GM23248 (cell line): ENCODE measurements at regions of chr15 and their contacts with region 1.

Region 1: GRCh38 chr15:39767921-39768320 is 14.7 kb downstream of the FSIP1 start:
- DNase-seq: no peak
- H3K4me3 ChIP-seq: no peak overlapping the region
- H3K27ac ChIP-seq: no peak overlapping the region
- H3K4me1 ChIP-seq: peaks cover 15% of the 10 kb centered on the region
- H3K27me3 ChIP-seq: no peaks in the 10 kb centered on the region

Region 2: DNA sequence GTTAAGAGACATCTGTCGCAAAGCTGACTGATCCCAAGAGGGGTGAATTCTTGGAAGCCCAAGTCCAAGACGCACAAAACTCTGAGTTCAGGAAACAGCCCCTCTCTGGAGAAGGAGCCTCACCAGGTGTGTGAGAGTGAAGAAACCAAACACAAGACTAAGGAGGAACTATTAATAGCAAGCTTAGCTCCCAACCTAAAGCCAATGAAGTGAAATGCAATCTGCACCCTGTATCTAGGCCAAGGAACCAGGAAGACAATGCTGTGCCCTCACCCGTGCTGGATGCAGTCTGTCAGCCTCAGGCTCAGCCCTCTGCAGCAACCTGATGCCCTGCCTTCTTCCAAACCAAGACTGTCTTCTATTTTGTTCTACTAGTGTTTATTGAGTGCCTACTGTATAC is 209.5 kb before region 1 on chr15:
- in situ Hi-C with region 1: no loop called
- DNase-seq: no peak
- H3K4me3 ChIP-seq: no peak overlapping the region
- H3K27ac ChIP-seq: no peak overlapping the region
- H3K4me1 ChIP-seq: no peaks in the 10 kb centered on the region
- H3K27me3 ChIP-seq: no peaks in the 10 kb centered on the region

Region 3: GRCh38 chr15:39602143-39602542 is 165.8 kb before region 1 on chr15:
- in situ Hi-C with region 1: loop called (anchors 10 kb)
- DNase-seq: peak; percentile 13
- H3K4me3 ChIP-seq: no peak overlapping the region
- H3K27ac ChIP-seq: no peak overlapping the region
- H3K4me1 ChIP-seq: peaks cover 16% of the 10 kb centered on the region
- H3K27me3 ChIP-seq: no peaks in the 10 kb centered on the region

Region 4: DNA sequence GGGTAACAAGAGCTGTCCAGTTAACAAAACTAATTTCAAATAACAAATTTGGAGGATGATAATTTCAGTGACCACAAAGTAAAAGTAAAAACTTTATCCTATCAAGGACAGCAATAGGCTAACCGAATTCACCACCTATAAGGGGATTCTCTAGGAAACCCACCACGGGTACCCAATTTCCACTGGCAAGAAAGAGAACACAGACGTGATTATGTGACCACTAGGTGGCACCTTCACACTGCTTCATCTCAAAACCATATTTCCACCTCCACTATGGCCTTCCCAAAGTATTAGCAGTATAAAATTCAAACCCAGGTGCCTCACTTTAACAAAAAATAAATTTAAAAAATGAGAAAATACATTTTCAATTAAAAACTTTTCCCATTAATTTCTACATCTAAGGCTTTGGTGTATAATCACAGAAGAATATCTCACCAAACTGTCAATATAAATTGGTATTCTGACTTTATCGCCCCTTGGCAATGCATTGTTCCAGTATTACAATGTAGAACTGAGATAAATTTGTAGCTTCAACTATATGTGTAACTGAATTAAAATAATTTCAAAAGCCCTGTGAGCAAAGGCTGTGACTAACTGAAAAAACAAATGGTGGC is 81.8 kb before region 1 on chr15:
- in situ Hi-C with region 1: loop called (anchors 10 kb)
- DNase-seq: peak; percentile 72
- H3K4me3 ChIP-seq: no peak overlapping the region
- H3K27ac ChIP-seq: no peak overlapping the region
- H3K4me1 ChIP-seq: peaks cover 53% of the 10 kb centered on the region
- H3K27me3 ChIP-seq: no peaks in the 10 kb centered on the region